ENCODE measurements at regions of chr6 and their contacts with region 1.

Region 1: DNA sequence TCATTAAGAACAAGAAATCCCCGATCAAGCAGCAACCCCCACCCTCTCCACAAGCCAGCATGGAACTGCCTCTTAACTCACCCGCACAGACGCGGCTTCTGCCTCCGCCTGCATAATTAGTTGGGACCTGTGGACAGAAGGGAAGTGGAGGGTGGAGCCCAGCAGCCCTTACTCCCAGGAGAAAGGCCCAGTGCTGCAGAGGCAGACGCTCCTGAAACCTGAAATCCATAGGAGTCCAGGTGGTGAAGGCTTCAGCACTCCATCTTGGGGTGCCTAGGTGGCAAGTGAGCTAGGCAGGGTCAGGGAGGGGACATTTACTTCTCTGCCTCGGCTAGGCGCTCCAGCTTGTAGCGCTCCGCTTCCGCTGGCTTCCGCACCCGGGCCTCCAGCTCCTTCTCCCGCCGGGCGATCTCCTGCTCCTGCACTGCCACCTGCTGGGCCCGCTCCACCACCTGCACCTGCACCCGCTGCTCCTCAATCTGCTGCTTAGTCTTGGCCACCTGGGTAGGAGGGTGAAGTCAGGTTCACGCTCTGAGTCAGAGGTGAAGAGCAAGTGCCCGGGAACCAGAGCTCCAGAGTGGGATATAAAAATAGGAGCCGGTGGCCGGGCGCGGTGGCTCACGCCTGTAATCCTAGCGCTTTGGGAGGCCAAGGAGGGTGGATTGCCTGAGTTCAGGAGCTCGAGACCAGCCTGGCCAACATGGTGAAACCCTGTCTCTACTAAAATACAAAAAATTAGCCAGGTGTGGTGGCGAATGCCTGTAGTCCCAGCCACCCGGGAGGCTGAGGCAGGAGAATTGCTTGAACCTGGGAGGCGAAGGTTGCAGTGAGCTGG is 10.7 kb downstream of the TUBB start:
- DNase-seq: peak; percentile 92
- H3K4me3 Mint-ChIP-seq: peak overlapping the region; percentile 26
- H3K27ac Mint-ChIP-seq: peak overlapping the region; percentile 78
- H3K4me1 Mint-ChIP-seq: peaks cover 65% of the 10 kb centered on the region
- H3K27me3 Mint-ChIP-seq: no peaks in the 10 kb centered on the region

Region 2: DNA sequence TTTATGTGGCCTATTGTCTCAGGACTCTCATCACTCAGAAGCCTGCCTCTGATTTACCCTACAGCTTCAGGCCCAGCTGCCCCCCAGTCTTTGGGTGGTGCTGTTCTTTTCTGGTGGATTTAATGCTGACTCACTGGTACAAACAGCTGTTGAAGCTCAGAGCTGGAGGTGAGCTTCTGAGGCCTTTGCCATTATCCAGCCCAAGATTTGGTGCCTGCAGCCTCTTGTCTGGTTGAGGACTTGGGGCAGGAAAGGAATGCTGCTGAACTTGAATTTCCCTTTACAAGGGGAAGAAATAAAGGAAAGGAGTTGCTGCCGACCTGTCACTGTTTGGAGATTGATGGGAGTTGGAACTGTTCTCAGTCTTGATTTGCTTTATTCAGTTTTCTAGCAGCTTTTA is 139.8 kb before region 1 on chr6:
- CTCF ChIA-PET with region 1: interaction called, 10 read pairs
- DNase-seq: no peak
- H3K4me3 Mint-ChIP-seq: no peak overlapping the region
- H3K27ac Mint-ChIP-seq: no peak overlapping the region
- H3K4me1 Mint-ChIP-seq: peaks cover 2% of the 10 kb centered on the region
- H3K27me3 Mint-ChIP-seq: no peaks in the 10 kb centered on the region

Region 3: DNA sequence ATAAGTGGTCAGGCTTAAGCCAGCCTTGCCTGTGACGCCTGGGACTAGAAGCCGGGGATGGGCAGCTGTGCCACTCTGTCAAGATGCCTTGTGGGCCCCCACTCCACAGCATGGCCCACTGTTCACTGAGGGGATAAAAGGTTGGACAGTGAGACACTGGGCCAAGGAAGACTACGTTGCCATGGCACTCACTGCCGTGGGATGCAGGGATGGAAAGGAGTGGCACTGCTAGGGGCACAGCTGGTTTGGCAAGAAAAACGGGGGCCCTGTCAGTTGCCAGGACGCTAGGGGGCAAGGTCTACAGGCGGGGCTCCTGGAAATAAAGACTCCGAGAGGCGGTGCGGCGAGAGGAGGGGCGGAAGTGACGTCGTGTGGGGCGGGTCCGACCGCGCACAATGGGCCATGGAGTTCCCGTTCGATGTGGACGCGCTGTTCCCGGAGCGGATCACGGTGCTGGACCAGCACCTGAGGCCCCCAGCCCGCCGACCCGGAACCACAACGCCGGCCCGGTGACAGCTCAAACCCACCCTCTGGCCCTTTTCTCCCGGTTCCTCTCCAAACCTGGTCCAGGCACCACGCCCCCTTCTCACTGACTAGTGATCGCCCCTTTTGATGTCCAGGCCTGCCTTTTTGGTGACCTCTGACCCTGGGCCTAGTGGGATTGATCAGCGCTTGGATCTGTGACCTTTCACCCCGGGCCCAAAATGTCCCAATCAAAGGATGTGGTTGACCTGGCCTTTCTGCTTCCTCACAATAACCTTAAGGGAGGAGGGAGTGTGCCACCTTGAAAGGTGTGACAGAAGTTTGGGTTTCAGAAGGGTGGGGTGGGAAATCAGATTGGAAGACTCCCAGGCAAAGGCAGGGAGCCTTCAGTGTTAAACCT is 104.1 kb before region 1 on chr6 and contains the start of gene ATAT1:
- CTCF ChIA-PET with region 1: no interaction called
- DNase-seq: peak; percentile 94
- H3K4me3 Mint-ChIP-seq: peak within 1 kb of the TSS; percentile 90
- H3K27ac Mint-ChIP-seq: peak within 1 kb of the TSS; percentile 97
- H3K4me1 Mint-ChIP-seq: peaks cover 31% of the 10 kb centered on the region
- H3K27me3 Mint-ChIP-seq: no peaks in the 10 kb centered on the region

Region 4: DNA sequence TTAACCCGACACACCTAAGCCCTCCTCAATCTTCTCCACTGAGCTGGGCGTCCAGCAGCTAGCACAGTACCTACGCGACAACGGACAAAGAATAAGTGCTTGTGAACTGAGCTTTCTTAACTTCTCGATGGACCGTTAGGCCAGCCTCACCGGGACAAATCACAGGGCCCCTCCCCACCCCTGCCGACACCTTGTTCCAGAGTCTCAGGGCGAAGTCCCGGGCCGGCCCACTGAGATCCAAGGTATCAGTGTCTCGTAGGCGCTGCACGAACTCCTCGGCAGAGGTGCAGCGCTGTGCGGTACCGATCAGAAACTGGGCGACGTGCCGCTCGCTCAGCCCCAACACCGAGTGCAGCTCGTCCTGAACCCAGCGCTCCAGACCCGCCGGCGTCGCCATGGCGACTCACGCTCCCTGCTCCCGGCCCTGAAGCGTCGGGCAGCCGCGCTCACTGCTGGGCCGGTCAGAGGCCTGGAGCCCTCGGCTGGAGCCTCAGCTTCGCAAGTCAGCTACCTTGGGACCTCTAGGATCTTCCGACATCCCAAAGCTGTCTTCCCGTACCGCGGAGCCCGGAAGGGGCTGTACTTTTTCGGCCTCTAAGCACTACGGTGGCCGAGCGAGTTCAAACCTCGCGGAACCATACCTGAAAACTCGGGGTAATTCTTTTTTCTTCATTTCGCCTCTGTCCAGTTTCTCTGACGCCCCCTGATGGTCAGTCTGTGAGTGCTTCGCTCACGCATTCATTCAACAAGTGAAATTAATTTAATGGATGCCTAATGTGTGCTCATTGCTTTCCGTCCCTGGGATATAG is 58.2 kb before region 1 on chr6 and contains the start of gene DHX16:
- CTCF ChIA-PET with region 1: interaction called, 285 read pairs
- DNase-seq: peak; percentile 94
- H3K4me3 Mint-ChIP-seq: peak within 1 kb of the TSS; percentile 87
- H3K27ac Mint-ChIP-seq: peak within 1 kb of the TSS; percentile 84
- H3K4me1 Mint-ChIP-seq: peaks cover 44% of the 10 kb centered on the region
- H3K27me3 Mint-ChIP-seq: no peaks in the 10 kb centered on the region

Region 5: DNA sequence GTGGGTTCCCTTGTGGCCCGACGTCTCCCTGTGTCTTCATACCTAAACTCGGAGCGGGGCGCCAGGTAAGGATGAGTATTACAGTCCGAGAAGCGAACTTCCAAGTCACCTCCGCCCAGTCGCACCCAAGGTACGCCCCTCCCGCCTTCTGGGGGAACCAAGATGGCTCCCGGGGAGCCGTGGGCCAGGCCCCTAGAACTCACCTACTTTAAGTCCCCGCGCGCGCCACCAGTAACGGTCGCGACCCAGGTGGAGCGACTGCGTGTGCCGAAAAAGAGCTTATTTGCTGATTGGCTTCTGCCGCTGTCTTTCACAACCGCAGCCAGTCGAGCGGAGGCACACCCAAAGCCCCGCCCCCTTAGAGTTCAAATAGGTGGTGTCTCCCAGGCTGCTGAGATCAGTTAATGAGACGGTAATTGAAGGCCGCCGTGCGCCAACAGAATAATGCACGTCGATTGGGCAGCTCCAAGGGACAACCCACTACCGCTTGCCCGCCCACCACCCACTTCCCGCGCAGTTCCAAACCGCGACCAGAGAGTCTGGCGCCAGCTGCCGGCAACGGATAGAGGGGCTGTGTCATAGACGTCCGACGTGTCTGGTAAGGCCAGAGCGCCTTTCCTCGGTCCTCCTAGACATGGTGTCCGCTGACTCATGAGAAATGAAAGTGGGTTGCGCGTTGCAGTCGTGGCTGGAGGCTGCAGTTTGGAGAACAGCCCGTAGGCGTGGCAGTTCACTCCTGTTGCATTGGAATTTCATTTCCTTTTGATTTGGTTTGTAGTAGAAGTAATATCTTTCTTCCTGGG is 13.6 kb before region 1 on chr6 and contains the start of gene MDC1:
- CTCF ChIA-PET with region 1: interaction called, 30 read pairs
- DNase-seq: peak; percentile 100
- H3K4me3 Mint-ChIP-seq: peak within 1 kb of the TSS; percentile 88
- H3K27ac Mint-ChIP-seq: peak within 1 kb of the TSS; percentile 97
- H3K4me1 Mint-ChIP-seq: peaks cover 63% of the 10 kb centered on the region
- H3K27me3 Mint-ChIP-seq: no peaks in the 10 kb centered on the region

Region 6: DNA sequence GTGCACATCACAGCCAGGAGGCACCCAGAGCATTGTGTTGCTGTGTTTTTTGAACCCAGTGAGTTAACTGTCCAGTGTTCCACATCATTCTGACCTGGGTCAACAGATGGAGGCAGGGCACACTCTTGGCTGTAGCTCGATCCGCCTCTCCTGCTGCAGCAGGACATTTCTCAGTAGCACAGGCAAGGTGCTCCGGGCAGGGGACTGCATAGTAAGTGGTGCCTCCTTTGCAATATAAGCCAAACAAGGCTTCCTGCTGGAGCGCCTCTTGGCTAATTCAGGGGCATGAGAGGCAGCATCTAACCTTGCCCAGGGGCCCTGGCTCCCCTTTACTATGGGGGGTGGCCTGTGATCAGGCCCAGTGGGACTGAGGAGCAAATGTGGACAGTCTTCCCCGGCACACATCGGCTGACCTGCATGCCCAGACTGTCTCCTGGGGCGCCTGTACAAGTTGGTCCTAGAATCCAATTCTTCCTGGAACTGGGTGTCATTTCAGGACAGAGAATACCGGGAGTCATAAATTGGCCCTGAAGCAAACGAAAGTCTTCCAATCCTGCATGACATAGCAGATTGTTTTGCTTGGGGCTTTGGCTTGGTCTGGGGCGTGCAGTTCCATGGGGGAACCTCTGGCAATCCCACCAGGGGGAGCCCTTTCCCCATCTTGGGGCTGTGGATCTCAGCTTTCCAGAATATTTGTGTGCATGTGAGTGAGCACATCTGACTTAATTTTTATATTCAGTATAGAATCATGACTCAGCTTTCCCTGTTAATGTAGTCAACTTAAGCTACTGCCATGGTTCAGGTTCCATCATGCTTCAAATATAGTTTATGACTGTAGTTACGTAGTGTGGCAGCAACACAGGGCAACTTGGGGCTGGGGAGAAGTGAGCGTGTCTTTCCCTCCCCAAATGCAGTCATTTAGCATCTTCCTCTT is 97.5 kb after region 1 on chr6:
- CTCF ChIA-PET with region 1: interaction called, 21 read pairs
- DNase-seq: peak; percentile 88
- H3K4me3 Mint-ChIP-seq: peak overlapping the region; percentile 86
- H3K27ac Mint-ChIP-seq: peak overlapping the region; percentile 75
- H3K4me1 Mint-ChIP-seq: peaks cover 69% of the 10 kb centered on the region
- H3K27me3 Mint-ChIP-seq: no peaks in the 10 kb centered on the region

Measured in activated naive CD4-positive, alpha-beta T cell treated with anti-CD3 and anti-CD28 coated beads, Interleukin-2, amount 10 ng/mL, durations not matched to agents 7 days and 5 days (primary cell).